Naive thymus-derived CD4-positive, alpha-beta T cell (primary cell): ENCODE measurements at regions of chr20 and their contacts with region 1.

Region 1: DNA sequence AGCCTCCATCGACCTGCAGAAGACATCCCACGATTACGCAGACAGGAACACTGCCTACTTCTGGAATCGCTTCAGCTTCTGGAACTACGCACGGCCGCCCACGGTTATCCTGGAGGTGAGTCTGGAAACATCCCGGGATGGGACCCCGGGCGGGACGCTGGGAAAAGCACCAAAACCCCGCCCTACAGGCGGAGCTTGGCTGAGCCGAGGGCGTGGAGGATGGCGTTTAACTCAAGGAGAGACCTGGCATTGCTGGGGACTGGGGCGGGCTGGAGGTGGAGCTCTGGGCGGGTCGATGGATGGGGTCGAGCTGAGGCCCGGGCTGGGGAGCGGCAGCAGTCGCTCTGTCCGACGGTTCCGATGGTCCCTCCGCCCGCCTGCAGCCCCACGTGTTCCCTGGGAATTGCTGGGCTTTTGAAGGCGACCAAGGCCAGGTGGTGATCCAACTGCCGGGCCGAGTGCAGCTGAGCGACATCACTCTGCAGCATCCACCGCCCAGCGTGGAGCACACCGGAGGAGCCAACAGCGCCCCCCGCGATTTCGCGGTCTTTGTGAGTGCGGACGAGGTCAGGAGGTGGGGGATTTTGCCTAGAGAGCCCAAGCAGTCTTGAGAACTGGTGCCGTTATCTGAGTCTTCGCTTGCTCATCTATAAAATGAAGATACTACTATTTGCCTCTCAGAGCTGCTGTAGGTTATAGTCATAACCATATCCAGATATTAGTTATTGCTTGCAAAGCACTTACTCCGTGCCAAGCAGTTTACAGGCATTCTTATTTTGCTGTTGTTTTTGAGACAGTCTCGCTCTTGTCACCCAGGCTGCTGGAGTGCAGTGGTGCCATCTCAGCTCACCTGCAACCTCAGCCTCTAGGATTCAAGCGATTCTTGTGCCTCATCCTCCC is 3.8 kb downstream of the SPAG4 start:
- DNase-seq: peak; percentile 54 to 84 (median 68)
- ATAC-seq: peak; percentile 31
- H3K4me3 ChIP-seq: peak overlapping the region; percentile 70
- H3K4me3 Mint-ChIP-seq: peak overlapping the region; percentile 87 to 98 (median 91)
- H3K27ac ChIP-seq: peak overlapping the region; percentile 27
- H3K27ac Mint-ChIP-seq: peak overlapping the region; percentile 62 to 90 (median 85)
- H3K4me1 ChIP-seq: peaks cover 16 to 28% of the 10 kb centered on the region in 2 donors
- H3K4me1 Mint-ChIP-seq: peaks cover 13 to 45% (median 34%) of the 10 kb centered on the region in 7 donors
- H3K27me3 ChIP-seq: no peaks in the 10 kb centered on the region
- H3K27me3 Mint-ChIP-seq: peaks cover 0 to 3% (median 0%) of the 10 kb centered on the region in 5 donors

Region 2: GRCh38 chr20:35284267-35284991 is 335.0 kb before region 1 on chr20 and contains the start of gene EIF6:
- CTCF ChIA-PET with region 1: no interaction called
- POLR2A ChIA-PET with region 1: no interaction called
- intact Hi-C with region 1: loop called in 1 of 2 experiments (anchors 2 kb)
- DNase-seq: peak; percentile 23 to 78 (median 53)
- ATAC-seq: peak; percentile 80
- H3K4me3 ChIP-seq: peak within 1 kb of the TSS; percentile 56
- H3K4me3 Mint-ChIP-seq: peak within 1 kb of the TSS; percentile 71 to 96 (median 91)
- H3K27ac ChIP-seq: peak within 1 kb of the TSS; percentile 89
- H3K27ac Mint-ChIP-seq: peak within 1 kb of the TSS; percentile 79 to 94 (median 87)
- H3K4me1 ChIP-seq: peaks cover 7 to 8% of the 10 kb centered on the region in 2 donors
- H3K4me1 Mint-ChIP-seq: peaks cover 18 to 43% (median 30%) of the 10 kb centered on the region in 7 donors
- H3K27me3 ChIP-seq: no peaks in the 10 kb centered on the region
- H3K27me3 Mint-ChIP-seq: no peaks in the 10 kb centered on the region
- total RNA-seq, gene EIF6: 35.4 to 117 (median 39.9) TPM

Region 3: DNA sequence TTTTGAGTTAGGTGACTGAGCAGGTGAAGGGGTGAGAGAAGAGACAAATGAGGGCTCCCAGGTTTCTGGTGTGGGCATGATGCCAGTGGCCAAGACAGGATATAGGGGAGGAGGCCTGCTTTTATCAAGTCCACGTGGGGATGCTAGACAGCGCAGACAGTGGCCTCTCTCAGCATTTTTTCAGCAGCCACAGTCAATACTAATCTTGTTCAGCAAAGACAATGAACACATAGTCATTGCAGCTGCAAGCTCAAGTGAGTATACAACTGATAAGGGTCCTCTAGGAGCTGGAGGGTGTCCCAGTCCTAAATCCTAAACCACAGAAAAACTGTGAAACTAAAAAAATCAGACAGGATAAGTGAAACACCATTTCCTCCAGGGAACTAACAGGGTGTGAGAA is 256.3 kb before region 1 on chr20:
- CTCF ChIA-PET with region 1: no interaction called
- POLR2A ChIA-PET with region 1: no interaction called
- intact Hi-C with region 1: no loop called
- DNase-seq: no peak
- ATAC-seq: no peak
- H3K4me3 ChIP-seq: no peak overlapping the region
- H3K4me3 Mint-ChIP-seq: no peak overlapping the region
- H3K27ac ChIP-seq: no peak overlapping the region
- H3K27ac Mint-ChIP-seq: no peak overlapping the region
- H3K4me1 ChIP-seq: no peaks in the 10 kb centered on the region
- H3K4me1 Mint-ChIP-seq: peaks cover 0 to 8% (median 4%) of the 10 kb centered on the region in 7 donors
- H3K27me3 ChIP-seq: no peaks in the 10 kb centered on the region
- H3K27me3 Mint-ChIP-seq: no peaks in the 10 kb centered on the region

Region 4: GRCh38 chr20:35463455-35464300 is 155.8 kb before region 1 on chr20:
- CTCF ChIA-PET with region 1: interaction called, 4 read pairs
- POLR2A ChIA-PET with region 1: interaction called, 3 read pairs
- intact Hi-C with region 1: loop called in 1 of 2 experiments (anchors 1 kb)
- DNase-seq: peak in 8 of 9 donors; percentile 40 to 70 (median 61)
- ATAC-seq: peak; percentile 90
- H3K4me3 ChIP-seq: no peak overlapping the region
- H3K4me3 Mint-ChIP-seq: no peak overlapping the region
- H3K27ac ChIP-seq: no peak overlapping the region
- H3K27ac Mint-ChIP-seq: peak overlapping the region in 3 of 9 donors; percentile 8 to 32 (median 13)
- H3K4me1 ChIP-seq: no peaks in the 10 kb centered on the region
- H3K4me1 Mint-ChIP-seq: peaks cover 5 to 14% (median 7%) of the 10 kb centered on the region in 7 donors
- H3K27me3 ChIP-seq: no peaks in the 10 kb centered on the region
- H3K27me3 Mint-ChIP-seq: no peaks in the 10 kb centered on the region

Region 5: DNA sequence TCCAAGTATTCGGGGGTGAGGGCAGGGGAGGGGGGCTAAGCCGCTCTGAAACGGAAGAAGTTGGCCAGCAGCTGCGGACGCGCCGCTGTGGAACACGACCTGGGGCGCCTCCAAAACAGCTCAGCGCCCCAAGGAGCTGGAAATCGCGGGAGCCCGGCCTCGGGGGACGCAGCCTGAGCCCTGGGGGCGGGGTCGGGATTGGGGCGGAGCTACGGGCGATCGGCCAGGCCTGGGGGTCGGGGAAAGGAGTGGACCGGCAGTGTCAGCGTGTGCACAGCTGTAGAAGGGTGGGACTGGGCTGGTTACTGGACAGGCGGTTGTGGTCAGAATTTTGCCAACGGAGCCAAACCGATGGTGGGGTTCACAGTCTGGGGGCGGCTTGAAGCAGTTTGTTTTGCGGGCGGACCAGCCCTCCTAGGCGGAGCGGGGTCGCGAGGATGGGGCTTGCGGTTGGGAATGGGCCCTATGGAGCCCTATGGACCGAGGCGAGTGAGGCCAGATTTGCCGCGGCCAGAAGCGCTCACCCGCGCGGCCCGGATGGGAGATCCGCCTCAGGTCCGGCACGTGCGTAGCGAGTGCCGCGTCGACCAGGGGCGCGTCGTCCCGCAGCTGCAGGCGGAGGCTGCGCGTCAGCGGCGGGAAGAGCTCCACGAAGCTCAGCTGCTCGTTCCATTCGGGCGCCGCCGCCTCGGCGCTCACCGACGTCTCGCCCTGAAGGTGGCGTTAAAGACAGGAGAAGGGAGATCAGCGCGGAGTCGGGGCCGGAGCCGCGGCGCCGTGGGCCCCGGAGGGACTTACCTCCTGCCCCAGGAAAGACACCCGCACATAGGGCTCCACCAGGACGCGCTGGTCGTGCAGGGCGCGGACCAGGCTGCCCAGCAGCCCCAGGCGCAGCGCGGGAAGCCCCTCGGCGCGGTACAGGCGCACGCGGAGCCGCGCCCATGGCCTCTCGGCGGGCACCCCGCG is 18.2 kb before region 1 on chr20:
- CTCF ChIA-PET with region 1: interaction called, 7 read pairs
- POLR2A ChIA-PET with region 1: interaction called, 4 read pairs
- intact Hi-C with region 1: loop called (anchors 1 kb)
- DNase-seq: peak; percentile 66 to 82 (median 77)
- ATAC-seq: peak; percentile 95
- H3K4me3 ChIP-seq: peak overlapping the region; percentile 72
- H3K4me3 Mint-ChIP-seq: peak overlapping the region; percentile 72 to 84 (median 80)
- H3K27ac ChIP-seq: peak overlapping the region; percentile 36
- H3K27ac Mint-ChIP-seq: peak overlapping the region in 1 of 9 donors; percentile 10
- H3K4me1 ChIP-seq: peaks cover 5 to 6% of the 10 kb centered on the region in 2 donors
- H3K4me1 Mint-ChIP-seq: peaks cover 0 to 11% (median 6%) of the 10 kb centered on the region in 7 donors
- H3K27me3 ChIP-seq: peaks cover 0 to 5% of the 10 kb centered on the region in 2 donors
- H3K27me3 Mint-ChIP-seq: peaks cover 0 to 65% (median 5%) of the 10 kb centered on the region in 5 donors

Region 6: DNA sequence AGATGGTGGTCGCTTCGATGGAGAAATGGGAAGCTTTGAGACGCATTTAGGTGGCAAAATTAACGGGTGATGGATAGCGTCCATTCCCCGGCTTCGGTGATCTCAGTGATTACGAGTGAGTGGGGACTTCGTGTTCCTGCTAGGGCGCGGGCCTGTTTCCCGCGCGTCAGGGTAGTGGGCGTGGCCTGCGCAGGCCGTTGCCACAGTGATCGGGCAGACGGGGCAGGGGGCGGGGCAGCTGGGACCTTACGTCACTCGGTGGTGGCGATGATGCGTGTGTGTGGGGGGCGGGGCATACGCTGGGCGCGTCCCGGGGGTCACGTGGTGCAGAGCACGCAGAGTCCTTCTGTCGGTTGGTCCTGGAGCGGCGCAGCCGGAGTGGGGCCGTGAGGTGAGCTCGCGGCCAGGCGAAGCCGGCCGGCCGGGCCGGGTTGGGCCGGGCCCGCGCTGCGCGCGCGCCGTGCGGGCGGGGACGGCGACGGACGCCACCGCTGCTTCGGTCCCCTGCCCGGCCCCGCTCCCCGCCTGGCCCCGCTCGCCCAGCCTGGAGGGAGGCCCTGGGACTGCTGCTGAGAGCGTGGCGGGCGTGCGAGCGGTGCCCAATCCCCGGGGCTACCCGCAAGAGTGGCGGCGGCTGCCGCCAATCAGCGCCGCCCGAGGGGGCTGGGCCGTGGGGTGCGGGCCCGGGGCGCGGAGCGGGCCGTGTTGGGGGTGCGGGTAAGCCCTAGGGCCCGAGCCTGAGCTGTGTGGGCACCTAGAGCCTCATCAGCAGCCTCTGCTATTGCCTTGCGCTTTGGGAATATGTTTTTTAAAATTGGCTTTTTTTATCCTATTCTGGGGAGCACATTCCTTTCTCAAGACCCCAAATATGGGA is 152.5 kb after region 1 on chr20 and contains the start of gene PHF20:
- CTCF ChIA-PET with region 1: interaction called, 3 read pairs
- POLR2A ChIA-PET with region 1: interaction called, 5 read pairs
- intact Hi-C with region 1: loop called (anchors 1 kb)
- DNase-seq: peak; percentile 98 to 100 (median 99)
- ATAC-seq: peak; percentile 90
- H3K4me3 ChIP-seq: peak within 1 kb of the TSS; percentile 59
- H3K4me3 Mint-ChIP-seq: peak within 1 kb of the TSS; percentile 84 to 97 (median 94)
- H3K27ac ChIP-seq: peak within 1 kb of the TSS; percentile 98
- H3K27ac Mint-ChIP-seq: peak within 1 kb of the TSS; percentile 96 to 100 (median 100)
- H3K4me1 ChIP-seq: peaks cover 76 to 78% of the 10 kb centered on the region in 2 donors
- H3K4me1 Mint-ChIP-seq: peaks cover 52 to 88% (median 74%) of the 10 kb centered on the region in 7 donors
- H3K27me3 ChIP-seq: no peaks in the 10 kb centered on the region
- H3K27me3 Mint-ChIP-seq: no peaks in the 10 kb centered on the region
- total RNA-seq, gene PHF20: 57.5 to 157 (median 78.0) TPM